ENCODE measurements at regions of chr17 and their contacts with region 1.

Region 1: DNA sequence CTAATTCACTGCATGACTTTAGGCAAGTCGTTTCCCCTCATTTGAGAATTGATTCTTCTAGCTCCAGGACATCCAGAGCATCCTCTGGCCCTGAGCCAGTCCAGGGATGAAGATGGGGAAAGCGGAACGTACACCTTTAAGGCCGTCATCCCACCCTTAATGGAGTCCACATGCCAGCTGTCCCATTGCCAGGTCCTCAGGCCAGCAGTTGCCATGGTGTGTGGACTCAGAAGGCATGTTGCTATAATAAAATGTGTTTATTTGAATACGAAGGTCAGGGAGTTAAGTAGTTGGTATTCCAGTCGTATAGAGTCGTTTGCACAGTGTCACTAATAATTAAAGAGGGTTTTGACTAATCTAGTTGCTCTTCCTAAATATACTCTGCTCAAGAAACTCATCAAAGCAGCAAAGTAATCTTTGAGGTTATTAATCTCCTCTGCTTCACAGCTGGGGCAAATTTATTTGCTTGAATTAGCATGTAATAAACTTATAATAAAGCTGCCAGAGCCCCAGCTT is 30.4 kb downstream of the CCDC182 start:
- DNase-seq: no peak
- H3K4me3 ChIP-seq: no peak overlapping the region
- H3K27ac ChIP-seq: no peak overlapping the region
- H3K4me1 ChIP-seq: no peaks in the 10 kb centered on the region
- H3K27me3 ChIP-seq: peaks cover 3% of the 10 kb centered on the region
- CTCF ChIP-seq: no peak

Region 2: GRCh38 chr17:57649731-57650484 is 64.8 kb before region 1 on chr17:
- intact Hi-C with region 1: loop called (anchors 10 kb)
- DNase-seq: no peak
- H3K4me3 ChIP-seq: no peak overlapping the region
- H3K27ac ChIP-seq: no peak overlapping the region
- H3K4me1 ChIP-seq: no peaks in the 10 kb centered on the region
- H3K27me3 ChIP-seq: no peaks in the 10 kb centered on the region
- CTCF ChIP-seq: no peak

Measured in colonic mucosa (tissue), 4 donors.